ENCODE measurements at regions of chr1 and their contacts with region 1.

Region 1: DNA sequence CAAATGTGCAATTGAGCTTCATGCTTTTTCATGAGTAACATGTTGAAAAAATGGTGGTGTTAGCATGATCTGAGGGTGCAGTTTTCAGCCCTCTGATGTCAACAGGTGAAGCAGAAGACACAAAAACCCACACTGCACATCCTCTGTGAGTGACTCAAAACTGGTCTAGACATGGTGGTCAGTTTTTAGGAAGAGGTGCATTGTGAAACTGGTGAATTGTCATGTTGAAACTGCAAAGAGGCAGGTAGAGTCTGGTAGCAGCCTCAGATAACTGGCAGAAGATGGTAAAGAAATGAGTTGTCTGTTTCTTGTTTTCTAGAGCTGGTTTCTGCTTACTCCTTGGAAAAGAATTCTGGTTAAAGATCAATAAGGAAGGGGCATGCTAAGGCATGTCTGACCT is 97.3 kb upstream of the HMCN1 start:
- DNase-seq: peak; percentile 62
- H3K4me3 Mint-ChIP-seq: no peak overlapping the region
- H3K27ac Mint-ChIP-seq: peak overlapping the region; percentile 83
- H3K4me1 Mint-ChIP-seq: peaks cover 15% of the 10 kb centered on the region
- H3K27me3 Mint-ChIP-seq: peaks cover 3% of the 10 kb centered on the region

Region 2: GRCh38 chr1:184881941-184882913 is 754.6 kb before region 1 on chr1:
- CTCF ChIA-PET with region 1: no interaction called
- POLR2A ChIA-PET with region 1: no interaction called
- intact Hi-C with region 1: loop called (anchors 2 kb)
- DNase-seq: peak; percentile 48
- H3K4me3 Mint-ChIP-seq: peak overlapping the region; percentile 13
- H3K27ac Mint-ChIP-seq: peak overlapping the region; percentile 92
- H3K4me1 Mint-ChIP-seq: peaks cover 33% of the 10 kb centered on the region
- H3K27me3 Mint-ChIP-seq: peaks cover 2% of the 10 kb centered on the region

Region 3: GRCh38 chr1:185559684-185560331 is 77.0 kb before region 1 on chr1:
- CTCF ChIA-PET with region 1: interaction called, 3 read pairs
- POLR2A ChIA-PET with region 1: no interaction called
- intact Hi-C with region 1: loop called (anchors 1 kb)
- DNase-seq: peak; percentile 74
- H3K4me3 Mint-ChIP-seq: no peak overlapping the region
- H3K27ac Mint-ChIP-seq: peak overlapping the region; percentile 69
- H3K4me1 Mint-ChIP-seq: peaks cover 36% of the 10 kb centered on the region
- H3K27me3 Mint-ChIP-seq: no peaks in the 10 kb centered on the region

Region 4: DNA sequence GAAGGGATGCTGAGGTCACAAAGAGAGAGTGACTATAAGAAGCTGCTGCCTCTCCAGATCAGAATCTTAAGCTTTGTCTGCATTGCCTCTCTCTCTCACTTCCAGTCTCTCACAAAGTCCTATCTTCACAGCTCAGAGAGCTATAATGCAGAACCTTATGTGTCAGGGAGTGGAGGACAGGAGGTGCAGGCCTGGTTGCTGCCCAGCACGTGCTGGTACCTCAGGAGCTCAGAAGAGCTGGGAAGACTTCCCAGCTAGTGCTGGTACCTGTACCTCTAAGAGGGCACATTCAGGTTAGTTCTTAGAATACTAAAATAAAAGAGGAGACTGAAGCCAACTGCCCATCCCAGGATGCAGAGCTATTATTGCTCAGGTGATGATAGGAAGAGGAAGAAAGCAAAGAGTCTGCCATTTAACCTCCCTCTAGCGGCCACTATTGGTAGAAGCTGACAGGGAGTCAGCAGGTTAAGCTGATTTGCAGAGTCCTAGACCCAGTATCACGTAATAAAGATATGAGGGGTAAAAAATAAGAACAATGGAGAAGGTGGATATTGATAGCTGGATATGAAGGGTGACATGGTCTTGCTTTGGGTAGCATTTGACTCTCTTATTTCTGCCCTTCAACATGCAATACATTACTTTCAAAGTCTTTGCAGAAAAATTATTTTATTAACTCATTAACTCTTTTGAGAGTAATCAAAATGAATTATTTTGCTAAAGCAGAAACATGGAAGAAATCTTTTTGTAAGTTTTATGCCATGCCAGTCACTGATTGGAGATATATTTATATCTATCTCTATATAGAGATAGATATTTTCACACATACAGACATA is 40.8 kb before region 1 on chr1:
- CTCF ChIA-PET with region 1: interaction called, 11 read pairs
- POLR2A ChIA-PET with region 1: no interaction called
- intact Hi-C with region 1: no loop called
- DNase-seq: peak; percentile 55
- H3K4me3 Mint-ChIP-seq: no peak overlapping the region
- H3K27ac Mint-ChIP-seq: no peak overlapping the region
- H3K4me1 Mint-ChIP-seq: peaks cover 23% of the 10 kb centered on the region
- H3K27me3 Mint-ChIP-seq: no peaks in the 10 kb centered on the region

Region 5: DNA sequence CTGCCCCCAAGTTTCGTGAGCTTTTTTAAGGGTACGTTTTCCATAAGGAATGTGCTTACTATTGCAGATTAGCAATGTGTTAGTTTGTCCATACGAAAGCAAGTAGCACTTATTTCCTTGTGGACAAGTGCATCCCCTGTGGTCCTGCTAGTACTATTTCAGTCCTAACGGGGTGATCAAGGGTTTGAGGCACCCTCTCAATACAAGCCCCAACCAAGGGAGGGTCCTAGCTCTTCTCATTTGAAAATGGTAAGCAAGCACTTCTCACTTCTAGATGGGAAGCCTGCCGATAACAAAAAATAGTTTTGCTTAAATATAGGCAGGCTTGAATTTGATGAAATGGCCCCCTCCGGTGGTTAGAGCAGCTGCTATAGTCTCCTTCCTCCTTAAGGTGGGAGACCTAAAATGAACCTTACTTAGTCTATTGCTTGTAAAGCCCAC is 33.4 kb after region 1 on chr1:
- CTCF ChIA-PET with region 1: no interaction called
- POLR2A ChIA-PET with region 1: no interaction called
- intact Hi-C with region 1: loop called (anchors 2 kb)
- DNase-seq: peak; percentile 57
- H3K4me3 Mint-ChIP-seq: no peak overlapping the region
- H3K27ac Mint-ChIP-seq: no peak overlapping the region
- H3K4me1 Mint-ChIP-seq: peaks cover 15% of the 10 kb centered on the region
- H3K27me3 Mint-ChIP-seq: no peaks in the 10 kb centered on the region

Measured in activated CD4-positive, alpha-beta memory T cell treated with anti-CD3 and anti-CD28 coated beads for 36 hours (primary cell).